AG04449 (cell line): ENCODE measurements at regions of chr7 and their contacts with region 1.

Region 1: DNA sequence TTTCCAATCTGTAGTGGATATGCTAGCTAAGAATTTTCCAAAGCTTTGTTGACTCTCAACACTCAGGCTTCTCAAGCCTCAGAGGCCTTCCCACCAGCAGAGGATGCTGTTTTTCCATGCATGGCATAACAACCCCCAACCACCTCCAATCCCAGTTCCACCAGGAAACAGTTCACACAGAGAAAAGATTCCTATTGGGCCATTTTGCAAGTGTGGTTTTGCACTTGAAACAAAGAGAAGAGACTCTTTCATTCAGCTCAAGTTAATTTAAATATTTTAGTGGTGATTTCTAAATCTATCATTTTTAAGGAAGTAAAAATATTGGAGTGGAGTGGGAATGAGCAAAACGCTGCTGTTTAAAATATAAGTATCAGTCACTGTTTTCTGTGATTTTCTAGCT is 105.6 kb upstream of the COL1A2 start:
- DNase-seq: no peak
- H3K4me3 ChIP-seq: no peak overlapping the region
- CTCF ChIP-seq: peak; percentile 95

Region 2: GRCh38 chr7:94212160-94212559 is 76.9 kb before region 1 on chr7:
- CTCF ChIA-PET with region 1: no interaction called
- POLR2A ChIA-PET with region 1: no interaction called
- DNase-seq: no peak
- H3K4me3 ChIP-seq: no peak overlapping the region
- CTCF ChIP-seq: no peak

Region 3: DNA sequence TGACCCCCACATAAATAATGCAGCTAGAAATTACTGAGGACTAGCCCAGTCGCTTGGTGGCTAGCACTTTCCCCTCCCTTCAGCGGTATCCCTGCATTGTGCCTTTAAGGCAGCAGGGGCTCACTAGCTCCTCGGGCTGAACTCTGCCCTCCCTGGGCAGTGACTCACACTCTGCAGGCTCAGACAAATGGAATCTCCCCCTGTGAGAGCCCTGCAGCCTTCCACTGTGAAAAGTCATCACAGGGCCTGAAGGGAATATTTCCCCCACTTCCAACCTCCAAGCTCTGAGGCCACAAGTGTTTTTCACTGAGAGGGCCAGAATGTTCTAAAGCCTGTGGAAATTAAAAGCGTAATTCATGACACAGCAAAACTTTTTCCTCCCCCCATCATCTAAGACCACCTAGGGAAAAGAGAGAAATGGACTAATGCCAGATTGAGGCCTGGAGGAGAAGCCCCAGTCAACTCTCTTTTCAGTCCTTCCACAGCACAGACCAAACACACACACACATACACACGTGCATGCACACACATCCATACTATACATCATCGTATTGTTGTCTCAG is 12.0 kb after region 1 on chr7:
- CTCF ChIA-PET with region 1: interaction called, 22 read pairs
- POLR2A ChIA-PET with region 1: interaction called, 9 read pairs
- DNase-seq: no peak
- H3K4me3 ChIP-seq: peak overlapping the region; percentile 40
- CTCF ChIP-seq: peak; percentile 19

Region 4: DNA sequence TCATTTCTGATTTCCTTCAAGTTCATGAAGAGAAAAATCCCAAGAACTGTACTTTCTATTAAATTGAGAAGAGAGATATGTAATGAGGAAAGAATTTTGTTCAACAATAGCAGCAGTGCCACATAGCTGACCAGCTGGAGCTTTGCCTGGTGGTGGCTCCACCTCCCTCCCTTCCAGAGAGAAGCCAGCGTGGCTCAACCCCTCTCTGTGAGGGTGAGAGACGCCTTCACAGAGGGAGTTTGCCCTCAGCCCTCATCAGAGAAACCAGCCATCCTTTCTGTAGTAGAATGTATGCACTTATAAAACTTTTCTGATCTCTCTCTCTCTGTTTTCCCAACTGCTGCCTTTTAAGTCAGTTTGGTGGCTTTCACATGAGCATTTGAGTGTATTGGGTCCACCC is 85.2 kb after region 1 on chr7:
- CTCF ChIA-PET with region 1: interaction called, 34 read pairs
- POLR2A ChIA-PET with region 1: interaction called, 74 read pairs
- DNase-seq: no peak
- H3K4me3 ChIP-seq: peak overlapping the region; percentile 43
- CTCF ChIP-seq: no peak

Region 5: GRCh38 chr7:94400643-94401427 is 111.8 kb after region 1 on chr7:
- CTCF ChIA-PET with region 1: interaction called, 545 read pairs
- POLR2A ChIA-PET with region 1: interaction called, 691 read pairs
- DNase-seq: no peak
- H3K4me3 ChIP-seq: peak overlapping the region; percentile 73
- CTCF ChIP-seq: no peak

Region 6: DNA sequence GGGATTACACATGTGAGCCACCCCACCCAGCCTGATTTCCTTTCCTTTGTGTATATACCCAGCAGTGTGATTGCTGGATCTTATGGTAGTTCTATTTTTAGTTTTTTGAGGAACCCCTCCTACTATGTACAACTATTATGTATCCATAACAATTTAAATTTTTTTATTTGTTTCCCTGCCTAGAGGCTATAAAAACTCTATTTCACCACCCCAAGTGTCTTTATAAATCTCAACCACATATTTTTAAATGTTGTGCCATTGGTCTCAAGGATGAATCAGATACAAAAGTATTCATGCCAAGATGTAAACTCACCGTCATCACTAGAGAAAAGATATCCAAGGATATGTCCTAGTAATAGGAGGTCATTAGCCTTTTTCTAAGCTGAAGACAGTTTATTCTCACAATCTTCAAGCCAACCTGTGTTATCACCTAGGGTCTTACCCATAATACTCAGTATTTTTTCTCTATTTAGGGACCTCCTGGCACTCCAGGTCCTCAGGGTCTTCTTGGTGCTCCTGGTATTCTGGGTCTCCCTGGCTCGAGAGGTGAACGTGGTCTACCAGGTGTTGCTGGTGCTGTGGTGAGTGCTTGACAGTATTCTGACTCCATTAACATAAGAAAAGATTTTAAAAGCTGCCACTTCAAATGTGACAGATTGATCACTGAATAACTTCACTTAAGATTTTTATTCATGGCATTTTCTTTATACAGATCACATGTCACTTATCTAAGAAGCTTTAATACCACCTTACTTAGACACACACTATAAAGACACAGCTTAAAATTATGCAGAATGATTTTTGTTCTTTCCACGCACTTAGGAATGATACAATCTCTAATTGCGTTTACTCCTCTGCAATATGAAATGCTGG is 135.0 kb after region 1 on chr7:
- CTCF ChIA-PET with region 1: interaction called, 48 read pairs
- POLR2A ChIA-PET with region 1: interaction called, 57 read pairs
- DNase-seq: peak; percentile 47
- H3K4me3 ChIP-seq: no peak overlapping the region
- CTCF ChIP-seq: no peak

Region 7: DNA sequence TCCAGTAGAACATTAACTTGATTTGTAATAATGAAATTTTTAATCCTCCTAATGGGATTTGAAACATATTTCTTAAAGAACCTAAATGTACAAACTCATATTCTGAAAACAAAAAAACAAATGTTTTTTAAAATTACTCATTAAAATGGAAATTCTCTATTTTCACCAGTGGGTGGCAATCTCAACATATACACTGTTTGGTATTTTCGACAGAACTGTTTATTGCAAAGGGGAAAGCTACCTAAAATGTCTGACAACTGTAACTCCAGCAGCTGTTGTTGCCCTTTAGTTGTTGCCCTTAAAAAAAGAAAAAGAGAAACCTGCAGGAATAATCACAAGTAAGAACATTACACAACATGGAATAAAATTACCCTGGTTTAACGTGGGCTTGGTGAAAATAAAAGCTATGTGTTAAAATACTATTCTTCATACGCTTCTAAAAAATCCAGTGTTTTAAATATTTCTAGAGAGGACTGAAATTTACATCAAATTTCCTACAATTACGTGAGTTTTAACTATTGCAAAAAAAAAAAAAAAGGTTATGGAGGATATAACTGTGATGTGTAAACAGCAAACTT is 160.2 kb after region 1 on chr7:
- CTCF ChIA-PET with region 1: interaction called, 788 read pairs
- POLR2A ChIA-PET with region 1: no interaction called
- DNase-seq: no peak
- H3K4me3 ChIP-seq: no peak overlapping the region
- CTCF ChIP-seq: peak; percentile 28